ENCODE measurements at regions of chr20 and their contacts with region 1.

Region 1: GRCh38 chr20:43187476-43188233 is 2.1 kb downstream of the PTPRT start:
- DNase-seq: peak; percentile 70 to 84 (median 75)
- ATAC-seq: peak; percentile 55
- H3K4me3 ChIP-seq: no peak overlapping the region
- H3K27ac ChIP-seq: no peak overlapping the region
- H3K4me1 ChIP-seq: peaks cover 17% of the 10 kb centered on the region
- H3K27me3 ChIP-seq: peaks cover 0 to 15% of the 10 kb centered on the region in 2 donors
- CTCF ChIP-seq: peak; percentile 72 to 97 (median 89)
- POLR2A ChIP-seq: no peak

Region 2: DNA sequence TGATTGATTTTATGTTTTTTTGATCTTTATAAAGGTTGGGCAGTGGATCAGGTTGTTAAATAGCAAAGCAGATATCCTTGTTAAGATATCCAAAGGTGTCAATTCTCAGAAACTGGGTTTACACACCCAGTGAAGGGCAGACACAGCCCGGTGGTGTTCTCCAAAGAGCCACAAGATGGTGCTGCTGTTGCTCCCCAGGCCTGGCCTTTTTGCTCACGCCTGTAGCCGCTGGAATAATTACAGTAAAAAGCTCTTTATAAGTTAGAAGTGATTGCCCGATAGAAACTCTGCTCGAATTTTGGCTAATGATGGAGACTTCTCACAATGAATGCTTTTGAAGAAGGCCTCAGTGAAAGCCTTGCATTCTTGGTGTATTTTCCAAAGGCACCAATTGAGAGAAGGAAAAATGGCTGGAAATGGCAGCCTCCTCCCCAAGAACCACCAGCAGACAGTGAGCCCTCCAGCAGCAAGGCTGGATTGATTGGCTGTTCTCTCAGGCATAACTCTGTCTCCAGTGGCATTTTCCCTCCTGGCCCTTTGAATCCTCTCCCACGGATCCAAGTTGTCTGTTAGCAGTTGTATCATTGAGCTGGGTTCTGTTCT is 1449.0 kb before region 1 on chr20:
- intact Hi-C with region 1: loop called (anchors 5 kb)
- DNase-seq: peak; percentile 52 to 64 (median 58)
- ATAC-seq: no peak
- H3K4me3 ChIP-seq: no peak overlapping the region
- H3K27ac ChIP-seq: no peak overlapping the region
- H3K4me1 ChIP-seq: no peaks in the 10 kb centered on the region
- H3K27me3 ChIP-seq: no peaks in the 10 kb centered on the region
- CTCF ChIP-seq: peak; percentile 37 to 85 (median 70)
- POLR2A ChIP-seq: no peak

Region 3: DNA sequence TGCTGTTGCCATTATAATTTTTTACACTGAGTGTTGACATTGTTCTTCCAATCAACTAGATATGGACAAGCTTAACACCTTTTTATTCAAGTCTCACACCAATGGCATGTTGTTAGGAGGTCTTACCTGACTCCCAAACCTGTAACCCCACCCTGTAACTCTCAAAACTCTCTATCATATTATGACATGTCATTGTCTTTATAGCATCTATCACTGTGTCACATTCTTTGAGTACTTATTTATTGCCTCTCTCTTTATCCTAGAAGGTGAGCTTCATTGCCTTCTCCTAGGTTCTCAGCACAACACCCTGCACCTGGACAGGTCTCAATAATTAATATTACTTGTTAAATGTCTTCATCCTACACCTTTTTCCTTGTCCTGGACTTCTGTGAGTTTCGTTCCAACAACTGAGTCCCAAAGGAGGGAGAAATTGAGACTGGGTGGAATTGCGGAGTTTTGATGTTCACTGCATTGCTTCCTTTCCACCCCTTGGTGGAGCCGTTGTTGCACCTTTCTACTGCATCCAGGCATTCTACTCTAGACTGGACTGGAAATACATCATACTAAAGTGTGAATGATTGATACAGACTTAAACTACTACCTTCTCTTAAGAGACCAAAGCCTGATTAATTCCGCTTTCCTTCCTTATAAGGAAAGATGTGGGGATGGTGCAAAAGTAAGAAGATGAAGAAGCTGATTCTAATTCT is 1231.5 kb before region 1 on chr20:
- intact Hi-C with region 1: loop called (anchors 10 kb)
- DNase-seq: peak in 2 of 4 donors; percentile 8 to 12
- ATAC-seq: no peak
- H3K4me3 ChIP-seq: no peak overlapping the region
- H3K27ac ChIP-seq: no peak overlapping the region
- H3K4me1 ChIP-seq: no peaks in the 10 kb centered on the region
- H3K27me3 ChIP-seq: no peaks in the 10 kb centered on the region
- CTCF ChIP-seq: peak in 5 of 7 experiments; percentile 25 to 47 (median 43)
- POLR2A ChIP-seq: no peak

Region 4: GRCh38 chr20:42204203-42204942 is 983.3 kb before region 1 on chr20:
- intact Hi-C with region 1: loop called (anchors 5 kb)
- DNase-seq: peak; percentile 24 to 45 (median 39)
- ATAC-seq: no peak
- H3K4me3 ChIP-seq: no peak overlapping the region
- H3K27ac ChIP-seq: no peak overlapping the region
- H3K4me1 ChIP-seq: no peaks in the 10 kb centered on the region
- H3K27me3 ChIP-seq: no peaks in the 10 kb centered on the region
- CTCF ChIP-seq: peak in 6 of 7 experiments; percentile 22 to 62 (median 57)
- POLR2A ChIP-seq: no peak